ENCODE measurements at regions of chr3 and their contacts with region 1.

Region 1: DNA sequence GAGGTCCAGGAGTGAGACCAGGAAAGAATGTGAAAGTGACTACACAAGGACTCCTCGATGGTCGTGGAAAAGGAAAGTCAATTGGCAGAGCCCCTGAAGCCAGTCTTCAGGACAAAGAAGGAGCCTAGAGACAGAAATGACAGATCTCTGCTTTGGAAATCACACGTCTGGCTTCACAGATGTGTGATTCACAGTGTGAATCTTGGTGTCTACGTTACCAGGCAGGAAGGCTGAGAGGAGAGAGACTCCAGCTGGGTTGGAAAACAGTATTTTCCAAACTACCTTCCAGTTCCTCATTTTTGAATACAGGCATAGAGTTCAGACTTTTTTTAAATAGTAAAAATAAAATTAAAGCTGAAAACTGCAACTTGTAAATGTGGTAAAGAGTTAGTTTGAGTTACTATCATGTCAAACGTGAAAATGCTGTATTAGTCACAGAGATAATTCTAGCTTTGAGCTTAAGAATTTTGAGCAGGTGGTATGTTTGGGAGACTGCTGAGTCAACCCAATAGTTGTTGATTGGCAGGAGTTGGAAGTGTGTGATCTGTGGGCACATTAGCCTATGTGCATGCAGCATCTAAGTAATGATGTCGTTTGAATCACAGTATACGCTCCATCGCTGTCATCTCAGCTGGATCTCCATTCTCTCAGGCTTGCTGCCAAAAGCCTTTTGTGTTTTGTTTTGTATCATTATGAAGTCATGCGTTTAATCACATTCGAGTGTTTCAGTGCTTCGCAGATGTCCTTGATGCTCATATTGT is 6.0 kb downstream of the CCR2 start:
- DNase-seq: peak; percentile 68
- ATAC-seq: peak; percentile 91
- H3K4me3 ChIP-seq: no peak overlapping the region
- H3K27ac ChIP-seq: peak overlapping the region; percentile 45
- H3K4me1 ChIP-seq: peaks cover 40% of the 10 kb centered on the region
- H3K27me3 ChIP-seq: no peaks in the 10 kb centered on the region
- CTCF ChIP-seq: no peak
- EP300 ChIP-seq: peak; percentile 25 to 42; a peak in 1 of 4 replicates
- POLR2A ChIP-seq: no peak
- RAD21 ChIP-seq: no peak

Region 2: DNA sequence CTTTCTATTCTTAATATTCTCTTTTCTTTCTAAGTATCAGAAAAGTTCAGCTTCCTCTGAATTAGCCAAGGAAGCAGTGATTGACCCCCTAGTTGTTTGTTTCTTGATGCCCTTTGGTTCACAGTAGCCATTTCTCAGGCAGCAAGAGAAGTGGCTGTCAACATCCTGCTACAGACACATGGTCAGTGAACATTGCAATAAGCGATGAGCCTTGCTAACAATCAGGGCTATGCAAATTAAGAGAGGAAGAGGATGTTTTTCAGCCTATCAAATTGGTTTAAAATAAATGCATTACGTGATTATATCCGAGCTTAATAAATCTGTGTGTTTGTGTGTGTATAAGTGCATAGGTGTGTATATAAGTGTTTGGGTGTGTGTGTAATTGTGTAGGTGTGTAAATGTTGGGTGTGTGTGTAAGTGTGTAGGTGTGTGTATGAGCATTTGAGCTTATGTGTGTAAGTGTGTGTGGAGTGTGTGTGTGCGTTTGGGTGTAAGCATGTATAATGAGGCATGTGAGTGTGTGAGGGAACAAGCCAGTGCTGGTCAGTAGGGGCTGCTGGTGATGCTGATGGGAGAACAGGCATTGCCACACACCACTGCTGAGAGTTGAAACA is 254.5 kb before region 1 on chr3:
- CTCF ChIA-PET with region 1: no interaction called
- POLR2A ChIA-PET with region 1: no interaction called
- RAD21 ChIA-PET with region 1: no interaction called
- SMC1A ChIA-PET with region 1: no interaction called
- in situ Hi-C with region 1: no loop called
- intact Hi-C with region 1: no loop called
- DNase-seq: no peak
- ATAC-seq: peak; percentile 25; the same call in 1 of the 3 replicates
- H3K4me3 ChIP-seq: no peak overlapping the region
- H3K27ac ChIP-seq: no peak overlapping the region
- H3K4me1 ChIP-seq: peaks cover 42% of the 10 kb centered on the region
- H3K27me3 ChIP-seq: no peaks in the 10 kb centered on the region
- CTCF ChIP-seq: no peak
- EP300 ChIP-seq: no peak
- POLR2A ChIP-seq: no peak
- RAD21 ChIP-seq: no peak

Region 3: GRCh38 chr3:46297658-46298463 is 62.1 kb before region 1 on chr3:
- CTCF ChIA-PET with region 1: interaction called, 6 read pairs
- POLR2A ChIA-PET with region 1: interaction called, 3 read pairs
- RAD21 ChIA-PET with region 1: interaction called, 4 read pairs
- SMC1A ChIA-PET with region 1: interaction called, 23 read pairs
- in situ Hi-C with region 1: no loop called
- intact Hi-C with region 1: loop called (anchors 2 kb)
- DNase-seq: no peak
- ATAC-seq: peak; percentile 20
- H3K4me3 ChIP-seq: no peak overlapping the region
- H3K27ac ChIP-seq: peak overlapping the region; percentile 47; the same call in 1 of the 2 replicates
- H3K4me1 ChIP-seq: peaks cover 68% of the 10 kb centered on the region
- H3K27me3 ChIP-seq: no peaks in the 10 kb centered on the region
- CTCF ChIP-seq: no peak
- EP300 ChIP-seq: no peak
- POLR2A ChIP-seq: no peak
- RAD21 ChIP-seq: no peak

Region 4: DNA sequence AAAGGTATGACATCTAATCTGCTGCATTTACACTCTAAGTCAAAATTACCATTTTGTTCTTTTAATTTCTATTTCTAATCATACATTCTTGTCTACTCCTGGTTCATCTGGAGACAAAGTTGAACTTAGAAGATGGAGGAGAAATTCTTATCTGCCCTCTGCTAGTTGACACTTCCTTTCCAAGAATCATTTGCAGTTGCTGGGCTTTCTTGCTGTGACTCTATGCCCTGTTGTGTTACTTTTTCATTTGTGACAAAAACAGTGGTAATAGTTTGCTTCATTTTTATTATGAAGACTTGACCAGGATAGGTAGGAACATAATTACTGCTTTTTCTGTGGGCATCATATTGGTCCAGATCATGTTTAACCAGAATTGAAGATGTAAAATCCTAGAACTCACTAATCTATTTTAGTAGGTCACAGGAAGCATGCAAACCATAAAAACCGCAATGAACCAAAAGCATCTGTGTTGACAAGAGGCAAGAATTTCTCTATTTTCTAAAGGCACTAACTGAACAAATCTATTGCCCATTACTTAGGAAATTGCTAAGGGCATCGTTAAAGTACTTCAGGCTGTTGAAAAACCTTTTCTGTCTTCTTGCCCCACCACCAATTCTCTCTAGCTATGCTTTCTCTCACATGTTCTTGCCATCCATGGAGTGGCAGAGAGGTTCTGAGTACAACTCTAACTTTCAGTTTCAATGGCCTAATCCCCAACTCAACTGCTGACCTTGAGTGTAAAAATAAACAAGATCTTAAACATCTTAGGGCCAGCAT is 10.2 kb before region 1 on chr3:
- CTCF ChIA-PET with region 1: interaction called, 15 read pairs
- POLR2A ChIA-PET with region 1: no interaction called
- RAD21 ChIA-PET with region 1: interaction called, 4 read pairs
- SMC1A ChIA-PET with region 1: interaction called, 19 read pairs
- in situ Hi-C with region 1: no loop called
- intact Hi-C with region 1: no loop called
- DNase-seq: no peak
- ATAC-seq: peak; percentile 92
- H3K4me3 ChIP-seq: peak overlapping the region; percentile 42
- H3K27ac ChIP-seq: peak overlapping the region; percentile 59
- H3K4me1 ChIP-seq: peaks cover 31% of the 10 kb centered on the region
- H3K27me3 ChIP-seq: no peaks in the 10 kb centered on the region; a peak in 1 of 4 replicates
- CTCF ChIP-seq: no peak
- EP300 ChIP-seq: no peak
- POLR2A ChIP-seq: no peak
- RAD21 ChIP-seq: no peak

Measured in GM12878 (cell line).